Naive thymus-derived CD4-positive, alpha-beta T cell (primary cell): ENCODE measurements at regions of chr14 and their contacts with region 1.

Region 1: GRCh38 chr14:65824285-65824977 is 411.9 kb downstream of the FUT8 start:
- DNase-seq: peak in 8 of 9 donors; percentile 38 to 71 (median 60)
- ATAC-seq: peak; percentile 93
- H3K4me3 ChIP-seq: no peak overlapping the region
- H3K4me3 Mint-ChIP-seq: peak overlapping the region in 1 of 10 donors; percentile 39
- H3K27ac ChIP-seq: no peak overlapping the region
- H3K27ac Mint-ChIP-seq: peak overlapping the region in 3 of 9 donors; percentile 0 to 66 (median 66)
- H3K4me1 ChIP-seq: peaks cover 6 to 8% of the 10 kb centered on the region in 2 donors
- H3K4me1 Mint-ChIP-seq: peaks cover 3 to 33% (median 14%) of the 10 kb centered on the region in 7 donors
- H3K27me3 ChIP-seq: no peaks in the 10 kb centered on the region
- H3K27me3 Mint-ChIP-seq: peaks cover 0 to 7% (median 0%) of the 10 kb centered on the region in 5 donors

Region 2: DNA sequence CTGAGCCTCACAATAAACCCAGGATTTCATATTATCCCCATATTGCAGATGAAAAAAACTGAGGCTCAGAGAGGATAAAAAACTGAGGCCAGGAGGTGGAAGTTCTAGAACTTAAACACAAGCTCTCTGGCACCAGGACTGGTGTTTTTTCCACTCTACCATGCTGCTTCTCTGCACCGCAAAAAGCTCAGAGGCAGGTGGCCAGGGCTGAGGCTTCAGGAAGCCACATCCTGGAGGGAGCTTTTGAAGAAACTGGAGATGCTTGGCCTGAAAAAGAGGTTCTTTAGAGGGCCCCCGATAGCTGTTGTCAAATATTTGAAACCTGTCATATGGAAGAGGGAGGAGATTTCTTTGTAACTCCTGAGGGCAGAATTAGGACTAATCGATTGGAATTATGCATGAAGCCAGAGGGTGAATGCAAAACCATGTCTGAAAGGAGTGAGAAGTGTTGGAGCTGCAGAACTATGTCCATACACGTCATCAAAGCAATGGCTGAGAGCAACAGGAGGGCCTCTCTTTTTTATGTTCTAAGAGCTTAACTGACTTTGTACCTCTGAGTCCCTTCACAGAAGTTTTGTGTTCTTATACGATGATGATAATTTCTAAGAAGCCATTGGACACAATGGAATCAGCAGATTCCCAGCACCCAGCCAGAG is 36.7 kb after region 1 on chr14:
- CTCF ChIA-PET with region 1: no interaction called
- POLR2A ChIA-PET with region 1: no interaction called
- intact Hi-C with region 1: loop called in 1 of 2 experiments (anchors 5 kb)
- DNase-seq: peak in 7 of 9 donors; percentile 22 to 64 (median 49)
- ATAC-seq: peak; percentile 62
- H3K4me3 ChIP-seq: no peak overlapping the region
- H3K4me3 Mint-ChIP-seq: peak overlapping the region; percentile 12 to 78 (median 61)
- H3K27ac ChIP-seq: no peak overlapping the region
- H3K27ac Mint-ChIP-seq: peak overlapping the region; percentile 69 to 85 (median 78)
- H3K4me1 ChIP-seq: peaks cover 18 to 53% of the 10 kb centered on the region in 2 donors
- H3K4me1 Mint-ChIP-seq: peaks cover 41 to 73% (median 66%) of the 10 kb centered on the region in 7 donors
- H3K27me3 ChIP-seq: no peaks in the 10 kb centered on the region
- H3K27me3 Mint-ChIP-seq: peaks cover 0 to 1% (median 0%) of the 10 kb centered on the region in 5 donors